PC-3 (cell line): ENCODE measurements at regions of chr17 and their contacts with region 1.

Region 1: DNA sequence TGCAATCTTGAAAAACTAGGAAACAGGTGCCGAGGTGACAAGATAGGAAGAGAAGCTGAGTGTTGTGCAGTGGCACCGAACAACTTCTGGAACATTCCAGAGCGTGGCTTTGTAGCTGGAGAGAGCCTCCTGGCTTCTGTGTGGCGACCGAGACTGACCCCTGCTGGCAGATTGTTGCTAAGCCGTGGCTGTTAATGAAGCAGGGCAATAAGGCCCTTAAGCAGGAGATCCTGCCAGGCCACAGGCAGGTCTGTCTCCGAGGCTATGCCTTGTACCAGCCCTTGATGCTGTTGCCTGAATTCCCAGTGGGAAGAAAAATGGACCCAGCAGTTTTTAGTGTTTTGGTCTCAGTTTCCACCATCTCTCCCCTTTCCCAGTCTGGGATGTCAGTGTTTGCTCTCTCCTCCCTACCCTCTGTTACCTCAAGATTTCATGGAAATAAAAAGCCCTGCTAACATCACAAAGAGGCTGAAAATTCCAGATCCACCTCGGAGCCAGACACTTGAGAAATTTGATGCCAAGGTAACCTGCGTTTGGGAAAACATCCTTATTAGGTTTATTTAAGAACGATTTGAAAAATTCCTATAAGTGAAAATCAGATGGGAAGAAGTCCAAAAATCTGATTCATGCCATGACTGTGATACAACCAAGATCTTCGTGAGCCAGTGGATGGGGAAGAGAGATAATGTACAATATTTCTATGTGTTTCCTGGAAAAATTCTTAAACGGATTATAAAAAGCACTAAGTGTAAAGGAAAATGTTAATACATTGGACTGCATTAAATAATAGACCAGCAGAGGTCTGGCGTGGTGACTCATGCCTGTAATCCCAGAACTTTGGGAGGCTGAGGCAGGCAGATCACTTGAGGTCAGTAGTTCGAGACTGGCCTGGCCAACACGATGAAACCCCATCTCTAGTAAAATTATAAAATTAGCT is 265.1 kb downstream of the PRKCA start:
- DNase-seq: peak; percentile 99
- ATAC-seq: peak; percentile 80
- H3K4me3 ChIP-seq: peak overlapping the region; percentile 16; the same call in 1 of the 2 replicates
- H3K27ac ChIP-seq: peak overlapping the region; percentile 94
- H3K4me1 ChIP-seq: peaks cover 49% of the 10 kb centered on the region
- H3K27me3 ChIP-seq: no peaks in the 10 kb centered on the region
- CTCF ChIP-seq: peak; percentile 100

Region 2: DNA sequence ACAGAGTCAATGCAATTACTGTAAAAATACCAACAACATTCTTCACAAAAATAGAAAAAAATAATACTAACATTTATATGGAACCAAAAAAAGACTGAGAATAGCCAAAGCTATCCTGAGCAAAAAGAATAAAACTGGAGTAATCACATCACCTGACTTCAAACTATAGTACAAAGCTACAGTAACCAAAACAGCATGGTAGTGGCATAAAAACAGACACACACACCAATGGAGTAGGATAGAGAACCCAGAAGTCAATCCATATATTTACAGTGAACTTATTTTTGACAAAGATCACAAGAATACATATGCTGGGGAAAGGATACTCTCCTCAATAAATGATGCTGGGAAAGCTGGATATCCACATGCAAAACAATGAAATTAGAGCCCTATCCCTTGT is 459.8 kb before region 1 on chr17:
- CTCF ChIA-PET with region 1: no interaction called
- POLR2A ChIA-PET with region 1: no interaction called
- intact Hi-C with region 1: no loop called
- DNase-seq: no peak
- ATAC-seq: no peak
- H3K4me3 ChIP-seq: no peak overlapping the region
- H3K27ac ChIP-seq: no peak overlapping the region
- H3K4me1 ChIP-seq: no peaks in the 10 kb centered on the region
- H3K27me3 ChIP-seq: no peaks in the 10 kb centered on the region
- CTCF ChIP-seq: no peak

Region 3: DNA sequence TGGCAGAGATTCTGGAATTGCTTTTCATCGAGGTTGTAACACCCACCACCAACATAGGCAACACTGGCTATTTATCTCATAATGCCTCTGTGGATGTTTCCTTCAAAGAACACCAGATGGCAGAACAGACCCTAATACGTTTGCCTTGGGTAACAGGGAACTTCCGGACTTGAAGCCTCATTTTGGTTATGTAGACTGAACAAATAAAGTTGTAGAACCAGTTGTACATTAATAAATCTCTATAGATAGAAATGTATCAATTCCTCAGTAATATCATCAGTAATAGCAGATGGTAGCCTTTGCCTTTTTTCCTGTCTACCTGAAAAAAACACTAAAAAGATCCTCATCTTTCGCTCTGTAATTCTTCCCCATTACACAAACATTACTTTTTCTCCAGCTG is 312.4 kb before region 1 on chr17:
- CTCF ChIA-PET with region 1: no interaction called
- POLR2A ChIA-PET with region 1: no interaction called
- intact Hi-C with region 1: loop called (anchors 1 kb)
- DNase-seq: peak; percentile 93
- ATAC-seq: peak; percentile 94
- H3K4me3 ChIP-seq: no peak overlapping the region
- H3K27ac ChIP-seq: no peak overlapping the region
- H3K4me1 ChIP-seq: peaks cover 8% of the 10 kb centered on the region
- H3K27me3 ChIP-seq: no peaks in the 10 kb centered on the region
- CTCF ChIP-seq: peak; percentile 96

Region 4: GRCh38 chr17:66301797-66302741 is 265.4 kb before region 1 on chr17 and contains the start of gene PRKCA:
- CTCF ChIA-PET with region 1: interaction called, 4 read pairs
- POLR2A ChIA-PET with region 1: no interaction called
- intact Hi-C with region 1: loop called (anchors 2 kb)
- DNase-seq: peak; percentile 87
- ATAC-seq: peak; percentile 78
- H3K4me3 ChIP-seq: peak within 1 kb of the TSS; percentile 94
- H3K27ac ChIP-seq: peak within 1 kb of the TSS; percentile 30
- H3K4me1 ChIP-seq: peaks cover 37% of the 10 kb centered on the region
- H3K27me3 ChIP-seq: no peaks in the 10 kb centered on the region
- CTCF ChIP-seq: no peak
- total RNA-seq, gene PRKCA: 22.6 and 28.2 TPM in 2 replicates

Region 5: GRCh38 chr17:66508896-66509843 is 58.3 kb before region 1 on chr17:
- CTCF ChIA-PET with region 1: interaction called, 6 read pairs
- POLR2A ChIA-PET with region 1: no interaction called
- intact Hi-C with region 1: loop called (anchors 2 kb)
- DNase-seq: peak; percentile 100
- ATAC-seq: peak; percentile 85
- H3K4me3 ChIP-seq: peak overlapping the region; percentile 21
- H3K27ac ChIP-seq: peak overlapping the region; percentile 96
- H3K4me1 ChIP-seq: peaks cover 53% of the 10 kb centered on the region
- H3K27me3 ChIP-seq: no peaks in the 10 kb centered on the region
- CTCF ChIP-seq: no peak

Region 6: GRCh38 chr17:66533572-66533971 is 33.9 kb before region 1 on chr17:
- CTCF ChIA-PET with region 1: no interaction called
- POLR2A ChIA-PET with region 1: no interaction called
- intact Hi-C with region 1: no loop called
- DNase-seq: no peak
- ATAC-seq: no peak; the same call in 1 of the 2 replicates
- H3K4me3 ChIP-seq: no peak overlapping the region
- H3K27ac ChIP-seq: no peak overlapping the region
- H3K4me1 ChIP-seq: peaks cover 5% of the 10 kb centered on the region; the same call in 1 of the 2 replicates
- H3K27me3 ChIP-seq: no peaks in the 10 kb centered on the region
- CTCF ChIP-seq: no peak

Region 7: DNA sequence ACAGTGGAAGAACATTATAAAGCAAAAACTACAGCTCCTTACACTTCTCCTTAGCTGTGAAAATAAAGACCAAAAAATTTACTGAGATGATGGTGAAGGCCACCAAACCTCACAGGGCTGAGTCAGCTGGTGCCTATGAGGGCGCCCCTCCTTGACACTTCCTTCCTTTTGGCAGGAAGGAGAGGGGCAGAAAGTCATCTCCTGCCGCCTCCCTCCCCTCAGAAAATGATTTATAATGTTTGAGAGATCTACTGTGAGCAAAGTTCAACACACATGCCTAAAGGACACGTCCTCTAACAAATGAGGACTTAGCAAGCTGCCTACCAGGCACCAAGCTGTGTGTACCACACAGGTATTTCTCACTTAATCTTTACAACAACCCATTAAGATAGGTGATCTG is 19.3 kb before region 1 on chr17:
- CTCF ChIA-PET with region 1: interaction called, 3 read pairs
- POLR2A ChIA-PET with region 1: no interaction called
- intact Hi-C with region 1: loop called (anchors 1 kb)
- DNase-seq: peak; percentile 85
- ATAC-seq: peak; percentile 49
- H3K4me3 ChIP-seq: peak overlapping the region; percentile 15; the same call in 1 of the 2 replicates
- H3K27ac ChIP-seq: peak overlapping the region; percentile 98
- H3K4me1 ChIP-seq: peaks cover 76% of the 10 kb centered on the region
- H3K27me3 ChIP-seq: no peaks in the 10 kb centered on the region
- CTCF ChIP-seq: no peak

Region 8: DNA sequence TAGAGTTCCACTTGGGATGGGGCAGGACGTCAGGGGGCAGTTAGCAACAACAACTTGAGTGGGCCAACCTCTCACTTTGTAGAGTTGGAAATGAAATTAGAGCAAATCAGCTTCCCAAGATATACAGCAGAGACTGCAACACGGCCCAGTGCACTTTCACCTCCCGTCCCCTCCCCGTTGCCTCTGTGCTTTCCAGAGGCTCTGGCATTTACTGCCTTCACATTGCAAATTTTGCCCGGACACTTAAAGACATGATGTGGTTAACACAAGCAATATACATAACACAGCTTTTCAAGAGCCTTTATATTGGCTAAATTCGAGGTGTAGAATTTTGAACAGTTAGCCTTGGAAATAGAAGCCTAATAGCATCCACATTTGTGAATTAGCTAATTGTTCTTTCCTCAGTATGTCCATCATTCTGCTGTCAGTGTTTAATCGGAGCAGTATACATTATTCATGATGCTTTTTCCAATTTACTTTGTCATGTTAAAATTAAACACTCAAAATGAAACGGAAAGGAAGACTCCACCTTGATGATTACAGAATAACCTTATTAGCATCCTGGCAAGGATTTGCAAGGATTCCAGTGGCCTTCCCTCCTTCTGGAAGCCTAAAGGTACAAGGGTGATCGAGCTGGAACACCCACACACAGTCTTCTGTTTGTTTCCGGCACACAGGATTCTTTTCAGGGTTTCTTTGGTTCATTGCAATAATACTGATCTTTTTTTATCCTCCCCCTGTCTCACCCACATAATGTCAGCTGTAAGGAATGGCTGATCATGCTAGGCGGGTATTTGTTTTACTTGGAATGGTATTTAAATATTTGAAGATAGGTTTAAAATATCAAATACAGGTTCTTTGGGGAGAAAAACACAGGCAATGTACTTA is 76.6 kb after region 1 on chr17:
- CTCF ChIA-PET with region 1: no interaction called
- POLR2A ChIA-PET with region 1: no interaction called
- intact Hi-C with region 1: no loop called
- DNase-seq: no peak
- ATAC-seq: no peak; the same call in 1 of the 2 replicates
- H3K4me3 ChIP-seq: no peak overlapping the region
- H3K27ac ChIP-seq: no peak overlapping the region
- H3K4me1 ChIP-seq: no peaks in the 10 kb centered on the region
- H3K27me3 ChIP-seq: no peaks in the 10 kb centered on the region
- CTCF ChIP-seq: no peak

Region 9: DNA sequence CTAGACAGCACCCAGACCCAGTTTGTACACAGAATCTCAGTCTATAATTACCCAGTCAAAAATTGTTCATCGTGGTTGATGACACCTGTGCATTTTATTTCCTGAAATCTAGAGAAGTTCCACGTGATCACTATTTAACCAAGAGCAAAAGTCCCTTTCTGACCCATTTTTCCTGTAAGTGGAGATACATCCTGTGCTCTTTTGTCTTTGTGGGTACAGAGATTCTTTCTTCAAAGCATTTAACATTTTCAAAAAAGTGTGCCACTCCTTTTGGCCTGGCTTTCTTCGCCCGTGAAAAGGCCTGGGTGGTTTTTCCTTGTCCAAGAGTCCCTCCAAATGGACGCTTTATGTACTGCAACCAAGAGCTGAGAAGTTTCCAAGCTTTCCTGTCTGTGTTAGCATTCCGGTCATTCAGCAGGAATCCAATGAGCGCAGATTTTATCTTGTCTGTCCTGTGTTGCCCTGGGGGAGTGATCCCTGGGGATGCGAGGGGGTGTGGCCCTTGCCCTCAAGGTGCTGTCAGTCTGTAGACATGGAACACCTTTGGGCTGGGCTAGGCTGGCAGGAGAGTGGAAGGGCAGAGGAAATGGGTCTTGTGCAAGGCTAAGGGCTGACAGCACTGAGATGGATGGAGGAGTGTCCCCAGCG is 106.3 kb after region 1 on chr17:
- CTCF ChIA-PET with region 1: interaction called, 3 read pairs
- POLR2A ChIA-PET with region 1: no interaction called
- intact Hi-C with region 1: loop called (anchors 1 kb)
- DNase-seq: peak; percentile 92
- ATAC-seq: peak; percentile 32
- H3K4me3 ChIP-seq: no peak overlapping the region
- H3K27ac ChIP-seq: no peak overlapping the region
- H3K4me1 ChIP-seq: peaks cover 42% of the 10 kb centered on the region
- H3K27me3 ChIP-seq: no peaks in the 10 kb centered on the region
- CTCF ChIP-seq: peak; percentile 97